Heart right ventricle (tissue), 16 donors: ENCODE measurements at regions of chr10 and their contacts with region 1.

Region 1: GRCh38 chr10:14478604-14479003 is 147.9 kb upstream of the FRMD4A start:
- DNase-seq: peak; percentile 65 to 68
- ATAC-seq: peak in 7 of 8 donors; percentile 71 to 86 (median 78)
- H3K4me3 ChIP-seq: no peak overlapping the region
- H3K27ac ChIP-seq: no peak overlapping the region
- H3K4me1 ChIP-seq: peaks cover 0 to 9% (median 4%) of the 10 kb centered on the region in 9 donors
- H3K27me3 ChIP-seq: peaks cover 0 to 3% (median 0%) of the 10 kb centered on the region in 7 donors
- CTCF ChIP-seq: peak; percentile 45 to 82 (median 68)

Region 2: DNA sequence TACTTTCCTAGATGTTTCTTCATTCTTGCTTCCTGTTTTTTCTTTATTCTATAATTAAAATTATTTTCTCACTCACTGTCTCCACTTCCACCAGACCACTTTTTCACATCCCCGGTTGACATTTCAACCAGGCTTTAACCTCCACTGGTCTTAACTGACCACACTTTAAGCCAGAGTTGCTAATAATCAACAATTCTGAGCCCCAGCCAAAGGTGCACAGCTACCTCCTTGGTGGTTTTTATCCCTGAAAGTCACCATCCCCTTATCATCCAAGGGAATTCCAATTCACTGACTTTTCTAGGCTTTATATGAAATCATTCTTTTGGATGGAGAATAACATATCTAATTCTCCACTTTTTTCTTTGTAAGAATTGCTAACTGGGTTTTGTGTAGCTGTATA is 286.7 kb before region 1 on chr10:
- intact Hi-C with region 1: loop called (anchors 1 to 5 kb)
- DNase-seq: no peak
- ATAC-seq: no peak
- H3K4me3 ChIP-seq: no peak overlapping the region
- H3K27ac ChIP-seq: no peak overlapping the region
- H3K4me1 ChIP-seq: no peaks in the 10 kb centered on the region
- H3K27me3 ChIP-seq: peaks cover 0 to 41% (median 13%) of the 10 kb centered on the region in 7 donors
- CTCF ChIP-seq: no peak

Region 3: GRCh38 chr10:14200698-14201544 is 277.7 kb before region 1 on chr10:
- intact Hi-C with region 1: loop called in 9 of 10 experiments (anchors 1 to 5 kb)
- DNase-seq: no peak
- ATAC-seq: no peak
- H3K4me3 ChIP-seq: no peak overlapping the region
- H3K27ac ChIP-seq: no peak overlapping the region
- H3K4me1 ChIP-seq: no peaks in the 10 kb centered on the region
- H3K27me3 ChIP-seq: peaks cover 0 to 75% (median 36%) of the 10 kb centered on the region in 7 donors
- CTCF ChIP-seq: peak in 5 of 9 donors; percentile 6 to 23 (median 21)